MCF 10A (cell line): ENCODE measurements at regions of chr1 and their contacts with region 1.

Region 1: GRCh38 chr1:84772428-84772943 is 82.2 kb upstream of the SSX2IP start:
- DNase-seq: peak; percentile 85
- H3K4me3 Mint-ChIP-seq: no peak overlapping the region
- H3K27ac Mint-ChIP-seq: no peak overlapping the region
- H3K4me1 Mint-ChIP-seq: peaks cover 5% of the 10 kb centered on the region
- H3K27me3 Mint-ChIP-seq: no peaks in the 10 kb centered on the region
- CTCF ChIP-seq: peak; percentile 79

Region 2: GRCh38 chr1:84286071-84286470 is 486.4 kb before region 1 on chr1:
- CTCF ChIA-PET with region 1: no interaction called
- POLR2A ChIA-PET with region 1: no interaction called
- intact Hi-C with region 1: no loop called
- DNase-seq: no peak
- H3K4me3 Mint-ChIP-seq: no peak overlapping the region
- H3K27ac Mint-ChIP-seq: no peak overlapping the region
- H3K4me1 Mint-ChIP-seq: no peaks in the 10 kb centered on the region
- H3K27me3 Mint-ChIP-seq: no peaks in the 10 kb centered on the region
- CTCF ChIP-seq: no peak

Region 3: DNA sequence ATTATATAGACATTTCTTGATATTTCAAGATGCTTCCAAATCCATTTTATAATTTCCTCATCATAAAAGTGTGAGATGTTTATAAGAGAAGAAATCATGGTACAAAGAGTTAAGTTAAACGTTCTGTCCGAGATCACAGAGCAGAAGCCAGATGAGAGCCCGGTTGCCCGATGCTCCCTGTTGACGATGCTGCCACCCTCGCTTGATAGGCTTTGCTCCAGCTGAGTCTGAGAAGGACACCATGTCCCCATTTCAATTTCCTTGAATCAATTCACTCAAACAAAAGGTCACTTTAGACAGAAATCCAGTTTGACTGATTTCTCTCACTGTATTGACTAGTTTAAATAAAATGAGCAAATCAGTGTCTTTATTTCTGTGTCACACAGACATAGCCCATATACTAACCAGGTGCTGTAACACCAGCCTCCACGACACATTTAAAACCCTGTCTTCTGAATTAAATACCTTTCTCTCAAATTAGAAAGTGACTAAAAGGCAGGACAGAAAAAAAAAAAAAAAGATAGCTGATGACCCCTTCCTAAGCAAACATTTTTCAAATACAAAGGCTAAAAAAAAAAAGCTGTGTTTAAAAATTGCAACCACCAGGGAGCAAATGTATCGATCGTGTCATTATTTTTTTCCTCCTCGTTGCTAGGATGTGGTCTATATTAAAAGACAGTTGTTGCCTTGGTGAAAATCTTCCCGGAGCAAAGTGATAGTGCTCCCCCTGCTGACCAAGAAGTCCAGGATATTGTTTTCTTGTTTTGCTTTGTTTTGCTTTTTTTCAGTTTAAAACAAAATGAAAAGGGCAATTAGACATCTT is 339.0 kb before region 1 on chr1:
- CTCF ChIA-PET with region 1: interaction called, 14 read pairs
- POLR2A ChIA-PET with region 1: no interaction called
- intact Hi-C with region 1: no loop called
- DNase-seq: peak; percentile 70
- H3K4me3 Mint-ChIP-seq: no peak overlapping the region
- H3K27ac Mint-ChIP-seq: no peak overlapping the region
- H3K4me1 Mint-ChIP-seq: no peaks in the 10 kb centered on the region
- H3K27me3 Mint-ChIP-seq: no peaks in the 10 kb centered on the region
- CTCF ChIP-seq: peak; percentile 61

Region 4: GRCh38 chr1:84620720-84621313 is 151.7 kb before region 1 on chr1:
- CTCF ChIA-PET with region 1: interaction called, 3 read pairs
- POLR2A ChIA-PET with region 1: no interaction called
- intact Hi-C with region 1: loop called (anchors 1 kb)
- DNase-seq: peak; percentile 75
- H3K4me3 Mint-ChIP-seq: peak overlapping the region; percentile 81
- H3K27ac Mint-ChIP-seq: peak overlapping the region; percentile 78
- H3K4me1 Mint-ChIP-seq: peaks cover 12% of the 10 kb centered on the region
- H3K27me3 Mint-ChIP-seq: no peaks in the 10 kb centered on the region
- CTCF ChIP-seq: peak; percentile 97

Region 5: DNA sequence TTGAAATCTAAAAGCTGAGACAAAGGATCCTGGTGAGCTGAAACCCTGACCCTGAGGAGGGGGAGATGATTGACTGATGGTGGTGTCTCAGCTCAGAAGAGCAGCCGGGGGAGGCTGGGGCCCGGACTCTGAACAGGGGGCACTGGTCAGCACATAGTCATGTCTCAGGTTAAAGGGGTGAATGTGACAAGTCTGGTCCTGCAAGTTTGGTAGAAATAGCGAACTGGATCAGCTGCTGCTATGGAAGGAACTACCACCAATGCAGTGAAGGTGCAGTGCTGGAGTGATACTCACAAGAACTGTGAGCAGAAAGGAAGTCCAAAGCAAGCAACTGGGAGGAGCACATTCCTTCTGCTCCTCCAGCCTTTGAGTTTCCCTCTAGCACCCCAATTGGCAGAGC is 16.5 kb after region 1 on chr1:
- CTCF ChIA-PET with region 1: interaction called, 22 read pairs
- POLR2A ChIA-PET with region 1: interaction called, 4 read pairs
- intact Hi-C with region 1: no loop called
- DNase-seq: no peak
- H3K4me3 Mint-ChIP-seq: no peak overlapping the region
- H3K27ac Mint-ChIP-seq: no peak overlapping the region
- H3K4me1 Mint-ChIP-seq: no peaks in the 10 kb centered on the region
- H3K27me3 Mint-ChIP-seq: no peaks in the 10 kb centered on the region
- CTCF ChIP-seq: no peak

Region 6: DNA sequence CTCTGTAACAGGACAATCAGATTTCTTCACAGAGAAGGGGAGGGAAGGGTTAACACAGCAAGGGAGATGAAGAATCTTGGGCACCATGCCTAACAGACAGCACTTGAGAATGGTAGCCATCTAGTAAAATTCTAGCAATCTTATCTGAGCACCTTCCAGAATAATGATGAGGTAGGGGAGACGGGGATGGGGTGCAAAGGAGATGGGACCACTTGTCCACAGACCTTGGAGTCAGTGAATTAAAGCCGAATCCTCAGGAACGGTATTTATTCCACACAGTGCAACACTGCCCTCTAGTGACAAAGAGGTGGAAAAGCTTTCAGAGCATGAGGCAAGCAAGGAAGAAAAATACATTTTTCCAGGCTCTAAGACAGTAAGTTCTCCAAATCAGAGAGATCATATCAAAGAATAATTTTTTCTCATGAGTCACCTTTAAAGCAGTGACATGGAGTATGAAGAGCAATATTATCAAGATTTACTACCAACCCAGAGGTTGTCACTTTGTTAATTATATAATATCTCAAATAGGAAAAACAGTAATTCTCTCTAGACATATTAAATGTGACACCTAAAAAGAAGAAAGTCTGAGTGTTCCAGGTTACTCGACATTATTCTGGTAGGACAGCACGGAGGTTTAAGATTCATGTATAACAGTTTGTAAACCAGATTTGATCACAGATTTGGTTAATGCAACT is 163.8 kb after region 1 on chr1:
- CTCF ChIA-PET with region 1: interaction called, 49 read pairs
- POLR2A ChIA-PET with region 1: interaction called, 4 read pairs
- intact Hi-C with region 1: loop called (anchors 1 kb)
- DNase-seq: peak; percentile 78
- H3K4me3 Mint-ChIP-seq: no peak overlapping the region
- H3K27ac Mint-ChIP-seq: no peak overlapping the region
- H3K4me1 Mint-ChIP-seq: no peaks in the 10 kb centered on the region
- H3K27me3 Mint-ChIP-seq: no peaks in the 10 kb centered on the region
- CTCF ChIP-seq: peak; percentile 89